PC-3 (cell line): ENCODE measurements at regions of chr6 and their contacts with region 1.

Region 1: GRCh38 chr6:36724514-36725390 is 27.1 kb downstream of the RAB44 start:
- DNase-seq: peak; percentile 86
- ATAC-seq: peak; percentile 90
- H3K4me3 ChIP-seq: no peak overlapping the region
- H3K27ac ChIP-seq: no peak overlapping the region
- H3K4me1 ChIP-seq: no peaks in the 10 kb centered on the region
- H3K27me3 ChIP-seq: no peaks in the 10 kb centered on the region
- CTCF ChIP-seq: peak; percentile 77

Region 2: GRCh38 chr6:34986845-34987246 is 1737.9 kb before region 1 on chr6:
- CTCF ChIA-PET with region 1: no interaction called
- POLR2A ChIA-PET with region 1: no interaction called
- intact Hi-C with region 1: no loop called
- DNase-seq: peak; percentile 75
- ATAC-seq: peak; percentile 62
- H3K4me3 ChIP-seq: no peak overlapping the region
- H3K27ac ChIP-seq: no peak overlapping the region
- H3K4me1 ChIP-seq: peaks cover 6% of the 10 kb centered on the region; the same call in 1 of the 2 replicates
- H3K27me3 ChIP-seq: no peaks in the 10 kb centered on the region
- CTCF ChIP-seq: peak; percentile 93

Region 3: GRCh38 chr6:36504982-36505381 is 219.8 kb before region 1 on chr6:
- CTCF ChIA-PET with region 1: no interaction called
- POLR2A ChIA-PET with region 1: no interaction called
- intact Hi-C with region 1: no loop called
- DNase-seq: no peak
- ATAC-seq: no peak
- H3K4me3 ChIP-seq: no peak overlapping the region
- H3K27ac ChIP-seq: no peak overlapping the region
- H3K4me1 ChIP-seq: peaks cover 10% of the 10 kb centered on the region; the same call in 1 of the 2 replicates
- H3K27me3 ChIP-seq: no peaks in the 10 kb centered on the region
- CTCF ChIP-seq: no peak

Region 4: GRCh38 chr6:36615018-36615761 is 109.6 kb before region 1 on chr6:
- CTCF ChIA-PET with region 1: interaction called, 4 read pairs
- POLR2A ChIA-PET with region 1: no interaction called
- intact Hi-C with region 1: loop called (anchors 10 kb)
- DNase-seq: peak; percentile 70
- ATAC-seq: no peak
- H3K4me3 ChIP-seq: no peak overlapping the region
- H3K27ac ChIP-seq: no peak overlapping the region
- H3K4me1 ChIP-seq: peaks cover 17% of the 10 kb centered on the region
- H3K27me3 ChIP-seq: no peaks in the 10 kb centered on the region
- CTCF ChIP-seq: peak; percentile 87

Region 5: DNA sequence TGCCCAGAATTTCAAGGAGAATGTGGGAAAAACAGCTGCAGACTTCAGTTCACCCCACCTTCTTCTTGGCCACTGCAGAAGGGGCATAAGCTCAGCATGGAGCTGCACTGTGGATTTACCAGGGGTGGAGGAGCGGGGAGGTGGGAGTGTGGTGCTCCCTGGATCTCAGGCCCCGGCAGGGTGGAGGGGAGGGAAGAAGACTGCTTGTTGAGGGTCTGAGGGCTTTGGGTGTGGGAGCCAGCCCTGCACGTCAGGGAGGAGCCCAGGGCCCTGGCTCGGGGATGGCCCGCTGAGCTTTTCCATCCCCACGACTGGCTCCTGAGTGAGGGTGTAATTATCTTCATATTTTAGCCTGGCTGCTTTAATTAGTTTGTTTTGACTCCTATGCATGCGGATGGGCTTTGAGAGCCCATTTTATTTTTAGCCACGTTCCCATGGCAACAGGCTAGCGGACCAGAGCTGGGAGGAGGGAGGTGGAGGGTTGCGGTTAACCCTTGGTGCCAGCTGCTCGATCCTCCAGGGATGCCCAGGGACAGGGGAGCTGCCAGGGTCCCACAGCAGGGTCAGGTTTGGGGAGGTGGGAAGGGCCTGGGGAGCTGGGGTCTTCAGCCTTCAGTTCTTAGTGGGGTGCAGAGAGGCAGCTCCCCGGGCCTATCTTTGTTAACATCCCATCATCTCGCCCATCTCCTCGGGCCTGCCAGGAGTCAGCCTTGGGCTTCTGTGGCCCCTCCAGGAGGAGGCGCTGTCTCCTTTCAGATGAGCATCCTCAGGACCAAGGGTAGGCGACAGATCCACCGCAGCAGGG is 41.0 kb after region 1 on chr6:
- CTCF ChIA-PET with region 1: no interaction called
- POLR2A ChIA-PET with region 1: no interaction called
- intact Hi-C with region 1: no loop called
- DNase-seq: peak; percentile 90
- ATAC-seq: peak; percentile 75
- H3K4me3 ChIP-seq: no peak overlapping the region
- H3K27ac ChIP-seq: no peak overlapping the region
- H3K4me1 ChIP-seq: peaks cover 25% of the 10 kb centered on the region
- H3K27me3 ChIP-seq: no peaks in the 10 kb centered on the region
- CTCF ChIP-seq: peak; percentile 97